GM10248 (cell line): ENCODE measurements at regions of chr9 and their contacts with region 1.

Region 1: GRCh38 chr9:96302021-96302420 is at the start of gene HSD17B3:
- DNase-seq: no peak
- CTCF ChIP-seq: no peak

Region 2: GRCh38 chr9:96317335-96317980 is 15.4 kb after region 1 on chr9:
- CTCF ChIA-PET with region 1: interaction called, 13 read pairs
- POLR2A ChIA-PET with region 1: no interaction called
- DNase-seq: peak; percentile 60
- CTCF ChIP-seq: peak; percentile 62